HCT116 (cell line): ENCODE measurements at regions of chr19 and their contacts with region 1.

Region 1: DNA sequence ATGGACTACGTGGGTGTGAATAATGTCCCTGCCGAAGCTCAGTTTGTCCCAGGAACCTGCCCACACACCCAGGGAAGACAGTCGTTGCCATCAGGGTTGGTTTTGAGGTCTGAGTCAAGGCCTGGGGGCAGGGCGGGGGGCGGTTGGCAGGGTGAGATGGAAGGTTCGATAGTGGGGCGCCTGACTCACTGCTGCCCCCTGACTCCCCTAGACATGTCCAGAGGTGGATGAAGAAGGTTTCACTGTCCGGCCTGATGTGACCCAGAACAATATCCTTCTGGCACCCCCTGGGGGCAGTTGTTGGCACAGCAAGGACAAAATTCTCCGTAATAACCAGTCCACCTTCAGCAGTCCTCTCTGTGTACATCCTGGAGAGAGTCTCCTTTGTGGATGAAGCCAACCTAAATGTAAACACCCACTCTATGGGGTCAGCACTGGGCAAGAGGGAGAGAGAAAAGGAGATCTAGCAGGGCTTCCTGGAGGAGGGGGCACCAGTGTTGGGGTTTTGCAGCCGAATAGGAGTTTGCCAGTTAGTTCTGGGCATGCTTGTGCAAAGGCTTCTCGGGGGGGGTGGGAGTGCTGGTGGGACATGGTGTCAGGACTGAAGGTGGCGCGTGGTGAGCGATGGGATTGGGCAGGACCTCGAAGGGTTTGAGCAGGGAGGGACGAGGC is 19.6 kb upstream of the B3GNT3 start:
- DNase-seq: no peak
- ATAC-seq: peak; percentile 16
- H3K4me3 ChIP-seq: no peak overlapping the region
- H3K27ac ChIP-seq: no peak overlapping the region; the same call in 1 of the 2 replicates
- H3K4me1 ChIP-seq: peaks cover 21 to 40% of the 10 kb centered on the region in 2 experiments
- H3K27me3 ChIP-seq: no peaks in the 10 kb centered on the region
- CTCF ChIP-seq: peak; percentile 82 to 93 (median 84)
- POLR2A ChIP-seq: no peak
- RAD21 ChIP-seq: peak; percentile 87

Region 2: DNA sequence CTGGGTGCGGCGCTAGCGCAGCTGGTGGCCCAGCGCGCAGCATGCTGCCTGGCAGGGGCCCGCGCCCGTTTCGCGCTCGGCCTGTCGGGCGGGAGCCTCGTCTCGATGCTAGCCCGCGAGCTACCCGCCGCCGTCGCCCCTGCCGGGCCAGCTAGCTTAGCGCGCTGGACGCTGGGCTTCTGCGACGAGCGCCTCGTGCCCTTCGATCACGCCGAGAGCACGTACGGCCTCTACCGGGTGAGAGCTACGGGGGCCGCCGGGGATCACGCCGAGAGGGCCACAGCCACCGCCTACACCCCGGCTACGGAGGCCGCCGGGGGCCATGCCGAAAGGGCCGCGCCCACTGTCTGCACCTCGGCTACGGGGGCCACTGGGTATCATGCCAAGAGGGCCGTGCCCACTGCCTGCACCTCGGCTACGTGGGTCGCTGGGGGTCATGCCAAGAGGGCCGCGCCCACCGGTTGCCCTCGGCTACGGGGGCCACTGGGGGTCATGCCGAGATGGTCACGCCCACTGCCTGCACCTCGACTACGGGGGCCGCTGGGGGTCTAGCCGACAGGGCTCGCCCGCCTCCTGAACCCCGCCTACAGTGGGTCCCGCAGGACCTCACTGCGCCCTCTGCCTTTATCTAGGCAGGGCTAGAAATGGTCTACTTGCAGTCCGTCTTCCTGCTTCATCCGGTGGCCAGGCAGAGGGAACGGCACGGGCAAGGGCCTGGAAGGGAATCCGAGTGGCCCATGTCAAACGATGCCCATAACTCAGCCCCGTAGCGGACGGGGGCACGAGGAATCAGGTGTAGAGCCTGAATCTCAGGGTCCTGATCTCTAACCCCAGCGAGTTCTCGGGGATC is 263.4 kb before region 1 on chr19:
- CTCF ChIA-PET with region 1: no interaction called
- POLR2A ChIA-PET with region 1: interaction called, 3 read pairs
- RAD21 ChIA-PET with region 1: no interaction called
- intact Hi-C with region 1: loop called (anchors 5 kb)
- DNase-seq: peak; percentile 76
- ATAC-seq: peak; percentile 46
- H3K4me3 ChIP-seq: peak overlapping the region; percentile 87 to 99
- H3K27ac ChIP-seq: peak overlapping the region; percentile 100
- H3K4me1 ChIP-seq: peaks cover 47 to 70% of the 10 kb centered on the region in 2 experiments
- H3K27me3 ChIP-seq: no peaks in the 10 kb centered on the region
- CTCF ChIP-seq: 0 out of 6 replicates have a peak, but pooled peaks of 2 of the 3 experiments have one; percentile 14 to 15
- POLR2A ChIP-seq: no peak
- RAD21 ChIP-seq: no peak

Region 3: DNA sequence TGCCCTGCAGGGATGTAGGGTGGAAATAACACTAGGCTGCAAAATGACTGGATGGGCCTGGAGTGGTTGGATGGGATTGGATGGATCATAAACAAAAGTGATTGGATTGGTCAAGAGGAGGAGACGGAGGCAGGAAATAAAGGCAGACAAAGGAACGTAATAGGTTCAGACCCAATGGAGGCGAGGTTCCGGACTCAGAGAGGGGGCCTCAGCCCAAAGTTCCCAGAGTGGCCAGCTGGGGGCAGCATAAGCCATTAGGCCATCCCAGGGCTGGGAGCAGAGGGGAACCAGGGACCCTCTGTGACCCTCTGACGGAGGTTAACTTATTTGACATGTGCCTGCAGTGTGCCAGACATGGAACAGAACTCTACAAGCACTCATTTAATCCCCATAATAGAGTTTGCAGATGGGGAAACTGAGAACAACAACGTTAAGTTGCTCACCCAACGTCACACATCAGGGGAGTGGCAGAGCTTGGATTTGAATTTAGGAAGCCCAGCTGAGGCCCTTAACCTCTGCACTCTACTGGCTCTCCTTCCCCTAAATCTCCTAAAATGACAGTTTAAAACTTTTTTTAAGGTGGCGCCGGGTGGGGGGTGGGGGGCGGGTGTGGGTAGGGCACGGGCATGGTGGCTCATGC is 71.4 kb before region 1 on chr19:
- CTCF ChIA-PET with region 1: interaction called, 5 read pairs
- POLR2A ChIA-PET with region 1: no interaction called
- RAD21 ChIA-PET with region 1: no interaction called
- intact Hi-C with region 1: loop called (anchors 5 kb)
- DNase-seq: peak; percentile 64
- ATAC-seq: peak; percentile 84
- H3K4me3 ChIP-seq: no peak overlapping the region
- H3K27ac ChIP-seq: no peak overlapping the region
- H3K4me1 ChIP-seq: no peaks in the 10 kb centered on the region
- H3K27me3 ChIP-seq: no peaks in the 10 kb centered on the region
- CTCF ChIP-seq: peak; percentile 64 to 93 (median 91)
- POLR2A ChIP-seq: no peak
- RAD21 ChIP-seq: peak; percentile 70

Region 4: GRCh38 chr19:17794731-17795536 is 19.6 kb after region 1 on chr19 and contains the start of gene B3GNT3:
- CTCF ChIA-PET with region 1: interaction called, 3 read pairs
- POLR2A ChIA-PET with region 1: interaction called, 5 read pairs
- RAD21 ChIA-PET with region 1: no interaction called
- intact Hi-C with region 1: loop called (anchors 2 kb)
- DNase-seq: peak; percentile 83
- ATAC-seq: peak; percentile 50
- H3K4me3 ChIP-seq: peak within 1 kb of the TSS; percentile 75 to 90
- H3K27ac ChIP-seq: peak within 1 kb of the TSS; percentile 84
- H3K4me1 ChIP-seq: peaks cover 64 to 92% of the 10 kb centered on the region in 2 experiments
- H3K27me3 ChIP-seq: no peaks in the 10 kb centered on the region
- CTCF ChIP-seq: no peak
- POLR2A ChIP-seq: peak; percentile 42
- RAD21 ChIP-seq: no peak
- total RNA-seq, gene B3GNT3: 22.2 TPM

Region 5: GRCh38 chr19:18021121-18021755 is 245.9 kb after region 1 on chr19:
- CTCF ChIA-PET with region 1: no interaction called
- POLR2A ChIA-PET with region 1: no interaction called
- RAD21 ChIA-PET with region 1: no interaction called
- intact Hi-C with region 1: no loop called
- DNase-seq: no peak
- ATAC-seq: peak; percentile 32
- H3K4me3 ChIP-seq: peak overlapping the region; percentile 72 to 87
- H3K27ac ChIP-seq: peak overlapping the region; percentile 66
- H3K4me1 ChIP-seq: peaks cover 29 to 51% of the 10 kb centered on the region in 2 experiments
- H3K27me3 ChIP-seq: no peaks in the 10 kb centered on the region
- CTCF ChIP-seq: no peak
- POLR2A ChIP-seq: no peak
- RAD21 ChIP-seq: no peak